Colonic mucosa (tissue), 4 donors: ENCODE measurements at regions of chr5 and their contacts with region 1.

Region 1: GRCh38 chr5:58498340-58498942 is 7.2 kb downstream of the GAPT start:
- DNase-seq: peak; percentile 59
- H3K4me3 ChIP-seq: no peak overlapping the region
- H3K27ac ChIP-seq: no peak overlapping the region
- H3K4me1 ChIP-seq: no peaks in the 10 kb centered on the region
- H3K27me3 ChIP-seq: no peaks in the 10 kb centered on the region
- CTCF ChIP-seq: peak; percentile 68

Region 2: GRCh38 chr5:58810086-58810485 is 311.6 kb after region 1 on chr5:
- intact Hi-C with region 1: loop called (anchors 5 kb)
- DNase-seq: no peak
- H3K4me3 ChIP-seq: no peak overlapping the region
- H3K27ac ChIP-seq: no peak overlapping the region
- H3K4me1 ChIP-seq: no peaks in the 10 kb centered on the region
- H3K27me3 ChIP-seq: no peaks in the 10 kb centered on the region
- CTCF ChIP-seq: no peak

Region 3: DNA sequence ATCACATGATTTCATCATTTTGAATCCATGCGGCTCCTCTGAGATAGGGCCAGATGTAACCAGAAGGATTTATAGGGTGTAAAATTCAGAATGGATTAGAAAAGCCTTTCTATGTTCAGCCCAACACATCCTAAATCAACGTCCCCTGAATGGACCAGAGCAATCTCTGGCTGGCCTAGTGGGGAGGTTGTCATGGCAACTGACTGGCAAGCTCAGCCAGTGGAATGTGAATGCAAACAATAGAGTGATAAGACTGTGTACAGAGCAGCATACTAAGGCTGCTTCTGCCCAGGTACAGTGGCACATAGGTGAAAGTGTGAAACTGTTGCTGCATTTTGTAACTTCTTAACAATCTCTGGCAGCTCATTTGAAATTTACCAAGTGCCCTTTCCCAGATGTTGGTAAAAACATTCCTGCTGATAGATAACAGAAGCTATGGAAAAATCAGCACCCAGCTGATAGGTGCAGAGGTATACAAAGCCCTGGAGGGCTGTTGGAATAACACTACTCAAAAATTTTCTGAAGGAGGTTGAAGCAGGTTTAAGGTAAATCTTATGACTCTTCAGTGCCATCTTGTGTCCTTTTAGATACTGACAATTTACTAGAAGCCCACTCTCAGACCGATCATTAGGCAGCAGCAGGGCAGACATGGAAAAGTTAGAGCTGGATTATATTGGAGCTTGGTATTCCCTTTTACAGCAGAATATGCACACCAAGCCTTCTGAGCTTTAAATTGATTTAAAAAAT is 351.7 kb after region 1 on chr5:
- intact Hi-C with region 1: loop called (anchors 5 kb)
- DNase-seq: peak; percentile 28
- H3K4me3 ChIP-seq: no peak overlapping the region
- H3K27ac ChIP-seq: no peak overlapping the region
- H3K4me1 ChIP-seq: no peaks in the 10 kb centered on the region
- H3K27me3 ChIP-seq: no peaks in the 10 kb centered on the region
- CTCF ChIP-seq: no peak

Region 4: DNA sequence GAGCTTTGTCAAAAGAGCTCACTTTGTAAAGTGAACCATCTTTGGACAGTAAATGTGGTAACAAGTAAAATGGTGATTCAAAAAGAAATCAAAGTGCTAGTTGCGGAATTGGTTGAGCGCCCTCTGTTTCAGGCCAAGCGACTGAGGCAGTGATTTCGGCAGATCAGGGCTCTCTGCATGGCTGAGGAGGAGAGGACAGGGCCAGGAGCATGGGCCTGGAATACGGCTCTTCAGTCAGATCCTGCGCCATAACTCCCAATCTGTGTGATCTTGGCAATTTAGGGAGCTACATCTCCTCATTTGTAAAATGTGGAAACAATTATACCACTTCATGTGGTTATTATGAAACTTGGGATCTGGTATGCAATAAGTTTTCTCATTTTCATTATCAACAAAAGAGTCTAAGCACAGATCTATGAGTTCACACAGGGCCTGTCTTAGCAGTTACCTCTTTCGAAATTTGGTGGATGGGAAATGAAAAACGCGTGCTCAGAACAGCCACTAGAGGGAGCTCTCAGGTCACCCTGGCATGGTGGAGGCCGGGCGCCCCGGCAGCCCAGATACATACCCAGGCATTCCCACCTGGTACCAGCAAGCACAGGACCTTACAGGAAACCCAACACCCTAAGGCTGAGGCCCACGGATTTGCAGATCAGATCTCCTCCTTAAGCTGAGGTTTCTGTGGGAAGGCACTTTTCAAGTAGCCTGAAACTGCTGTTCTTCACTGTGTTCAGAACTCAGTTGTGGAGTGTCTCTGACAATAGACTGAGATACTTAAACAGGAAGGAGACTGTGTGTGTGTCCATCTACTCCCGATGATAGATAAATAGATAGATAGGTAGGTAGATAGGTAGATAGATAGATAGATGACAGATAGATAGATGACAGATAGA is 388.1 kb after region 1 on chr5:
- intact Hi-C with region 1: no loop called
- DNase-seq: peak; percentile 55
- H3K4me3 ChIP-seq: no peak overlapping the region
- H3K27ac ChIP-seq: no peak overlapping the region
- H3K4me1 ChIP-seq: no peaks in the 10 kb centered on the region
- H3K27me3 ChIP-seq: no peaks in the 10 kb centered on the region
- CTCF ChIP-seq: peak; percentile 94